ENCODE measurements at regions of chr3 and their contacts with region 1.

Region 1: DNA sequence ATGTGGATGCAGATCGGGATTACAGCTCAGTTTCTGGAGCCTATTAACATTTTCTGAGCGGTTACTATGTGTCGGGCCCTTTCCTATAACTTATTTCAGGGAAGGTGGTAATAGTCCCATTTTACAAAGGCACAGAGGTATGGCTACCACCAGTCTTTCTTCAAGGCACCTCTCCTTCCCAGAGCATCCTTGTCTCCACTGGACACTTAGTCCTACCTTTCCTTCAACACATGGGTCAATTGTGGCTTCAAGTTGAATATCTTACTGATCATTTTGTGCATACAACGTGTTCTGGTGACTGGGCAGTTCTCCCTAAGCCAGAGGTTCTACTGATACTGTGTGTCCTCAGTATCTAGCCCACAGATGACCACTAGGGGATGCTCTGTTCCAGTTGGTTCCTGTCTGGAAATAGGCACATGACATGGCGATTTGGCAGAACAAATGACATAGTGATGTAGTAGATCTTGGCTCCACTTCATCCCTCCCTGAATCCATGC is 60.7 kb upstream of the CMTM8 start:
- DNase-seq: peak in 28 of 35 experiments; percentile 4 to 65 (median 26)
- ATAC-seq: peak; percentile 56 to 82 (median 71)
- H3K4me3 ChIP-seq: no peak overlapping the region
- H3K4me3 Mint-ChIP-seq: peak overlapping the region; percentile 1 to 57 (median 48)
- H3K27ac ChIP-seq: no peak overlapping the region
- H3K27ac Mint-ChIP-seq: no peak overlapping the region
- H3K4me1 ChIP-seq: peaks cover 2 to 7% of the 10 kb centered on the region in 2 experiments
- H3K4me1 Mint-ChIP-seq: peaks cover 13 to 16% (median 14%) of the 10 kb centered on the region in 3 donors
- H3K27me3 ChIP-seq: peaks cover 0 to 2% of the 10 kb centered on the region in 2 experiments
- H3K27me3 Mint-ChIP-seq: peaks cover 0 to 4% of the 10 kb centered on the region in 2 donors

Region 2: GRCh38 chr3:32334675-32335074 is 156.9 kb after region 1 on chr3:
- CTCF ChIA-PET with region 1: interaction called, 3 to 25 read pairs
- POLR2A ChIA-PET with region 1: interaction called in 1 of 2 experiments, 3 read pairs
- DNase-seq: peak; percentile 19 to 72 (median 51)
- ATAC-seq: peak; percentile 75 to 88 (median 78)
- H3K4me3 ChIP-seq: no peak overlapping the region
- H3K4me3 Mint-ChIP-seq: peak overlapping the region in 1 of 3 donors; percentile 64
- H3K27ac ChIP-seq: peak overlapping the region; percentile 18
- H3K27ac Mint-ChIP-seq: peak overlapping the region; percentile 84 to 92
- H3K4me1 ChIP-seq: peaks cover 20 to 30% of the 10 kb centered on the region in 2 experiments
- H3K4me1 Mint-ChIP-seq: peaks cover 59 to 63% (median 63%) of the 10 kb centered on the region in 3 donors
- H3K27me3 ChIP-seq: no peaks in the 10 kb centered on the region
- H3K27me3 Mint-ChIP-seq: no peaks in the 10 kb centered on the region